Natural killer cell (primary cell): ENCODE measurements at regions of chr4 and their contacts with region 1.

Region 1: GRCh38 chr4:83083925-83084475 is 30.5 kb downstream of the PLAC8 start:
- DNase-seq: peak; percentile 36 to 89
- ATAC-seq: peak; percentile 85 to 89 (median 89)
- H3K4me3 ChIP-seq: no peak overlapping the region
- H3K4me3 Mint-ChIP-seq: peak overlapping the region; percentile 64
- H3K27ac ChIP-seq: peak overlapping the region; percentile 80
- H3K27ac Mint-ChIP-seq: peak overlapping the region; percentile 91 to 93
- H3K4me1 ChIP-seq: peaks cover 44% of the 10 kb centered on the region
- H3K4me1 Mint-ChIP-seq: peaks cover 66 to 69% of the 10 kb centered on the region in 2 donors
- H3K27me3 ChIP-seq: no peaks in the 10 kb centered on the region
- H3K27me3 Mint-ChIP-seq: no peaks in the 10 kb centered on the region
- CTCF ChIP-seq: no peak

Region 2: DNA sequence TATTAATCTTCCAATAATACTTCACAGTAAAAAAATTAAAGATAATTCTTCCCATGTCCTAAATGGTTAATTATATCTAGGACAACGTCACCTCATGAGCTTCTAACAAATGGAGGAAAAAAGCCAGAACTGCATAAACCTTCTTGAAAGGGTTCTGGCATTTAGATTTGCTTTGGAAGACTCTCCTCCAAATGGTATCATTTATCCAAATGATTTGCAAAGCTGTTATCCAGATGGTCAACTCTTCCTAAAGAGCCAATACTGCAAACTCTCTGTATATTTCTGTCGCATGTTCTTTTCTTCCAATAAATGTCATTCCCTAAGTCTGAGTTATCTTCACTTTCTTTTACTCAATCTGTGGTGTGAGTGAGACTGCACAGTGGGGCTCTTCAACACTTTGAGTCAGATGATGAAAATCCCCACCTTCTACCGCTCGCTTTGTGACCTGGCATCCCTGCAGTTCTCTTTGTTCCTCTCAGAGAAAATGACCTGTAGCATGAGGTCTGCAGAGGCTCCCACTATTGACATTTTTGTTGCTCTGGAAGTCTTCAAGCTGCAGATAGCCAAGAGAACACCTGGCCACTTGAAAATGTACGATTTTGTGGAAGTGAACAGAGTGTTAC is 575.1 kb before region 1 on chr4:
- intact Hi-C with region 1: no loop called
- DNase-seq: no peak
- ATAC-seq: no peak
- H3K4me3 ChIP-seq: no peak overlapping the region
- H3K4me3 Mint-ChIP-seq: no peak overlapping the region
- H3K27ac ChIP-seq: no peak overlapping the region
- H3K27ac Mint-ChIP-seq: no peak overlapping the region
- H3K4me1 ChIP-seq: no peaks in the 10 kb centered on the region
- H3K4me1 Mint-ChIP-seq: no peaks in the 10 kb centered on the region
- H3K27me3 ChIP-seq: no peaks in the 10 kb centered on the region
- H3K27me3 Mint-ChIP-seq: peaks cover 10 to 20% of the 10 kb centered on the region in 2 donors
- CTCF ChIP-seq: no peak

Region 3: GRCh38 chr4:83138946-83139345 is 54.9 kb after region 1 on chr4:
- intact Hi-C with region 1: loop called (anchors 10 kb)
- DNase-seq: peak; percentile 59 to 60
- ATAC-seq: peak; percentile 91 to 99 (median 92)
- H3K4me3 ChIP-seq: no peak overlapping the region
- H3K4me3 Mint-ChIP-seq: peak overlapping the region; percentile 72
- H3K27ac ChIP-seq: peak overlapping the region; percentile 77
- H3K27ac Mint-ChIP-seq: peak overlapping the region; percentile 87 to 95
- H3K4me1 ChIP-seq: peaks cover 34% of the 10 kb centered on the region
- H3K4me1 Mint-ChIP-seq: peaks cover 53 to 61% of the 10 kb centered on the region in 2 donors
- H3K27me3 ChIP-seq: no peaks in the 10 kb centered on the region
- H3K27me3 Mint-ChIP-seq: no peaks in the 10 kb centered on the region
- CTCF ChIP-seq: no peak